Ovary (tissue), 10 donors: ENCODE measurements at regions of chr12 and their contacts with region 1.

Region 1: DNA sequence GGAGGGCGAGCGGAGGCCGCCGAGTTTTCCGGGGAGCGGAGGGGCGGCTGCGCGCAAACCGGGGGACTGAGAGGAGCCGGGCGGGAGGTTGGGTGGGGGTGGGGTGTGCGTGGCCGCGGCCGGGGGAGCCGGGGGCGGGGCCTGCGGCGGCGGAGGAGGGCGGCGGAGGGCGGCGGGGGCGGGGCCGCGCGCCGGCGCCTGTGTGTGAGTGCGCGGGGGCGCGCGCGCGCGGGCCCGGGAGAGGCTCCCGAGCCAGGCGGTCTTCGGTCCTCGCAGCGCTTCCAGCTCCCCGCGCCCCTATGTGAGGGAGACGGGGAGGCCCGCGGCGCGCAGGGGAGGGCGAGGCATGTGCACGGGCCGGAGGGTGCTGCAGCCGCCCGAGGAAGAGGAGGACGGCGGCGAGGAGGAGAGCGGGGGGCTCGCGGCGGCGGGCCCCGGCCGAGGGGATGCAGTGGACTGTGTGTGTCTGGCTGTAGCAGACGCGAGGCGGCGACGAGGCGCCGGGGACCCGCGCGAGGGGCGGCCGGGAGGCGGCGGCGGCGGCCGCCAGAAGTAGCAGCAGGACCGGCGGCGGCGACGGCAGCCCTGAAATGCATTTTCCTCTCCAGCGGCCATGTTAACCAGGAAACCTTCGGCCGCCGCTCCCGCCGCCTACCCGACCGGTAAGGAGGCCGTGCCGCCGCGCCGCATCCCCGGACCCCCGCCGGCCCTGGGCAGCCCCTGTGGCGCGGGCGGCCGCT is at the start of gene DYRK2:
- DNase-seq: peak; percentile 77 to 88 (median 83)
- H3K4me3 ChIP-seq: peak within 1 kb of the TSS; percentile 84
- H3K27ac ChIP-seq: peak within 1 kb of the TSS; percentile 61 to 90
- H3K4me1 ChIP-seq: peaks cover 10% of the 10 kb centered on the region
- H3K27me3 ChIP-seq: no peaks in the 10 kb centered on the region
- CTCF ChIP-seq: no peak
- EP300 ChIP-seq: no peak
- POLR2A ChIP-seq: peak; percentile 62
- total RNA-seq, gene DYRK2: 10.1 to 23.6 (median 20.2) TPM

Region 2: GRCh38 chr12:67268896-67269631 is 379.6 kb before region 1 on chr12 and contains the start of gene CAND1:
- intact Hi-C with region 1: loop called in 1 of 4 experiments (anchors 10 kb)
- DNase-seq: peak; percentile 98 to 99 (median 99)
- H3K4me3 ChIP-seq: peak within 1 kb of the TSS; percentile 83
- H3K27ac ChIP-seq: peak within 1 kb of the TSS; percentile 98 to 99
- H3K4me1 ChIP-seq: peaks cover 7% of the 10 kb centered on the region
- H3K27me3 ChIP-seq: no peaks in the 10 kb centered on the region
- CTCF ChIP-seq: peak in 2 of 3 donors; percentile 10 to 24
- EP300 ChIP-seq: peak; percentile 63
- POLR2A ChIP-seq: peak; percentile 81
- total RNA-seq, gene CAND1: 72.8 to 148 (median 123) TPM

Region 3: DNA sequence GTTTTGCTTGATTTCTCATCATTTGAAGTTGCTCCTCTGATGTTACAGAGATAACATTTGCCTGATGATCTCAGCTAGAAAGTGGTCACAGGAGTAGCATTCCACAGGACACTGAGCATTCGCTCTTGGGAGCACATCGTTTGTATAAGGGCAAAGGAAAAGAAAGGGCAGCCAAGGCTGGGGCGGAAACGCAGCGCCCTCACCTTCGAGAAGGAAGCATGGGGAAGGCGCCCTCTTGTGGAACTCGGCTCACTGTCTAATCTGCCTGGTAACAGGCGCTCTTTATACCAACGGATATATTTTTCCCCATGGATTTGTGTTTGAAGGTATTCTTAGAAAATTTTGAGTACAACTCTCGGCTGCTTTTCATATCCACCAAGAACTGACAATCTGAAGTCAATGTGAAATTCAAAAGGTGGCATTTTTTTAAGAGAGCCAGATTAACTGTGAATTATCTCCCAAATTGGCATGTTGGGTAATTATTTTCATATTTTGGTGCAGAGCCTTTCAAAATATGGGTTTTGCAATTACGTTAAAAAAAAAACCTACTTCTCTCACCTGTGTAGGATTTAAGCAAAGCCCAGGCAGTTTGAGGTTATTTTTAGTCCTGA is 206.8 kb before region 1 on chr12:
- intact Hi-C with region 1: loop called in 1 of 4 experiments (anchors 10 kb)
- DNase-seq: peak; percentile 84 to 91 (median 86)
- H3K4me3 ChIP-seq: no peak overlapping the region
- H3K27ac ChIP-seq: no peak overlapping the region
- H3K4me1 ChIP-seq: peaks cover 2% of the 10 kb centered on the region
- H3K27me3 ChIP-seq: no peaks in the 10 kb centered on the region
- CTCF ChIP-seq: peak; percentile 57 to 68 (median 60)
- EP300 ChIP-seq: no peak
- POLR2A ChIP-seq: no peak

Region 4: DNA sequence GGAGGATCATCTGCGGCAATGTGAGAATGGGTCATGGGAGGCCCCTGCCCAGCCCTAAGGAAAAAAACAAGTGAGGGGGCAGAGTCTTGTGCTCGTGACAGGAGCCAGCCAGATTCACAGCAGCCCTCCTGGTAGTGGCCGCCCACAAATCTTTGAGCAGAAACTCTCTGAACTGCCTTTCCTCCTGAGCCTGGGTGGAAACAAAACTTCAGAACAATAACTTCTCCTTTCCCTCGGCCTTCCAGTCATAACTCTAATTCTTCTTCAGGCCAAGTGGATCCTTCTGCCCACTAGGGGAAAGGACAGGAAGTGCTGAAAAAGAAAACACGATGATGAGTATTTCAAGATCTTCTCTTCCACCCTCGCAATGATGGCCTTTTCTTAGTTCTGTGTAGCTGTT is 190.9 kb before region 1 on chr12:
- intact Hi-C with region 1: loop called in 1 of 4 experiments (anchors 5 kb)
- DNase-seq: peak in 1 of 5 donors; percentile 23
- H3K4me3 ChIP-seq: no peak overlapping the region
- H3K27ac ChIP-seq: peak overlapping the region in 1 of 2 donors; percentile 31
- H3K4me1 ChIP-seq: peaks cover 22% of the 10 kb centered on the region
- H3K27me3 ChIP-seq: no peaks in the 10 kb centered on the region
- CTCF ChIP-seq: peak in 1 of 3 donors; percentile 26
- EP300 ChIP-seq: no peak
- POLR2A ChIP-seq: no peak

Region 5: DNA sequence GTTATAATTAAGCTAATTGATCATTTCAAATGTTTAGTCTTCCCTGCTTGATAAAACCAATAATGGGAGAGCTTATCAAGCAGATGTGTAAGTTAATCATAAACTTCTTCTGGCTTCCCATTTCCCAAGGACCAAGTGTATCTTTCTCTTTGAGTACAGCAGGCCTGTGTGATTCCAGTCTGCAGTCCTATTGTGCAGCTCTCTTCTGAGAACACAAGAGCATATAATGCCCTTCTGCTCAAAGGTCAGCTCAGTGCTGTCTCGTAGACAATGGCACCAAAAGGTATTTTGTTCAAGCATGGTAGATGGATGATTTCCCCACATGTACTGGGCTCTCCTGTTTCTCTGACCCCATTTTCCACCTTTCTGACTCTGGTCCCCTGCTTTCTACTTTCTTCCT is 101.9 kb before region 1 on chr12:
- intact Hi-C with region 1: no loop called
- DNase-seq: no peak
- H3K4me3 ChIP-seq: no peak overlapping the region
- H3K27ac ChIP-seq: no peak overlapping the region
- H3K4me1 ChIP-seq: no peaks in the 10 kb centered on the region
- H3K27me3 ChIP-seq: no peaks in the 10 kb centered on the region
- CTCF ChIP-seq: no peak
- EP300 ChIP-seq: no peak
- POLR2A ChIP-seq: no peak

Region 6: GRCh38 chr12:67943226-67943892 is 294.7 kb after region 1 on chr12:
- intact Hi-C with region 1: loop called in 1 of 4 experiments (anchors 10 kb)
- DNase-seq: peak in 4 of 5 donors; percentile 24 to 65 (median 38)
- H3K4me3 ChIP-seq: no peak overlapping the region
- H3K27ac ChIP-seq: no peak overlapping the region
- H3K4me1 ChIP-seq: no peaks in the 10 kb centered on the region
- H3K27me3 ChIP-seq: no peaks in the 10 kb centered on the region
- CTCF ChIP-seq: peak in 2 of 3 donors; percentile 54 to 55
- EP300 ChIP-seq: no peak
- POLR2A ChIP-seq: no peak